Heart left ventricle (tissue), 16 donors: ENCODE measurements at regions of chr1 and their contacts with region 1.

Region 1: GRCh38 chr1:29202584-29203340 is 21.1 kb upstream of the SRSF4 start:
- DNase-seq: peak; percentile 91 to 96 (median 93)
- ATAC-seq: peak; percentile 91 to 97 (median 94)
- H3K4me3 ChIP-seq: no peak overlapping the region
- H3K27ac ChIP-seq: peak overlapping the region; percentile 26 to 85 (median 72)
- H3K4me1 ChIP-seq: peaks cover 0 to 17% (median 9%) of the 10 kb centered on the region in 12 donors
- H3K27me3 ChIP-seq: no peaks in the 10 kb centered on the region
- CTCF ChIP-seq: peak; percentile 93 to 99 (median 98)
- POLR2A ChIP-seq: no peak

Region 2: GRCh38 chr1:28792644-28793121 is 410.1 kb before region 1 on chr1:
- intact Hi-C with region 1: loop called in 3 of 10 experiments (anchors 5 to 10 kb)
- DNase-seq: no peak
- ATAC-seq: peak in 2 of 4 donors; percentile 47 to 61
- H3K4me3 ChIP-seq: no peak overlapping the region
- H3K27ac ChIP-seq: peak overlapping the region in 1 of 12 donors; percentile 48
- H3K4me1 ChIP-seq: peaks cover 0 to 13% (median 0%) of the 10 kb centered on the region in 12 donors
- H3K27me3 ChIP-seq: peaks cover 0 to 9% (median 0%) of the 10 kb centered on the region in 9 donors
- CTCF ChIP-seq: peak in 2 of 12 donors; percentile 19 to 41
- POLR2A ChIP-seq: no peak

Region 3: DNA sequence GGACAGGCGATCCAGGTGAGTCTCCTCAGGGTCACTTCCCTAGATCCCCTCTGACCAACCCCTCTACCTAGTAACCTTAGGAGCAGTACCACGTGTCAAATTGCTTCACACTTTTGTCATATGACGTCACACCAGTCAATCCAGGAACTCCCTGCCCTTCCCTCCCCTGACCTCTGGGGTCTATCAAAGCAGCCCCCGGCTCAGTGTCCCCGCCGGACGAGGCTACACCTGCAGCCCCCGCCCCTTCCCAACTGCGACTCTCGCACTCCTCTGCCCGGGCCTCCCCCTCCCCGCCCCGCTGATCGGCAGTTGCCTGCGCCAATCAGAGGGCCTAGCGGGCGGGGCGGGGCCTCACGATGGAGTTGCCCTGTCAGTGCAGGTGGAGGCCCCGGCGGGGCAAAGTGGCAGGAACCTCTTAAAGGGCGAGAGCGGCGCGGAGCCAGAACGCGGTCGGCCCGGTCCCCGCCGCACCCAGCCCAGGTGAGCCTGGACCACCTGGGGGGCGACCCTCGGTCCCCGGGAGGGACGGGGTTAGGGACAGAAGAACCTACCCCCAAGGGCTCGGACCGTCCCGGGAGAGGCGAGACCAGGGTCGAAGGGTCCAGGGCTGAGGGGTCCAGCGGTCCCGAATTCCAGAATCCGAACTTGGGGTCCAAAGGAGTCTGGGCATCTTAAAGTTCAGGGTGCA is 315.9 kb before region 1 on chr1:
- intact Hi-C with region 1: loop called in 9 of 10 experiments (anchors 1 to 2 kb)
- DNase-seq: peak; percentile 83 to 94 (median 87)
- ATAC-seq: peak; percentile 76 to 85 (median 82)
- H3K4me3 ChIP-seq: peak overlapping the region; percentile 60 to 94 (median 87)
- H3K27ac ChIP-seq: peak overlapping the region; percentile 53 to 90 (median 84)
- H3K4me1 ChIP-seq: peaks cover 0 to 55% (median 16%) of the 10 kb centered on the region in 12 donors
- H3K27me3 ChIP-seq: peaks cover 0 to 10% (median 0%) of the 10 kb centered on the region in 9 donors
- CTCF ChIP-seq: no peak
- POLR2A ChIP-seq: peak; percentile 54 to 70

Region 4: GRCh38 chr1:29043274-29043965 is 159.3 kb before region 1 on chr1:
- intact Hi-C with region 1: loop called in 6 of 10 experiments (anchors 5 to 10 kb)
- DNase-seq: peak in 3 of 5 donors; percentile 14 to 43 (median 35)
- ATAC-seq: peak; percentile 84 to 97 (median 95)
- H3K4me3 ChIP-seq: peak overlapping the region in 1 of 12 donors; percentile 10
- H3K27ac ChIP-seq: peak overlapping the region in 6 of 12 donors; percentile 22 to 73 (median 50)
- H3K4me1 ChIP-seq: peaks cover 0 to 11% (median 0%) of the 10 kb centered on the region in 12 donors
- H3K27me3 ChIP-seq: no peaks in the 10 kb centered on the region
- CTCF ChIP-seq: no peak
- POLR2A ChIP-seq: no peak

Region 5: GRCh38 chr1:29055160-29055559 is 147.6 kb before region 1 on chr1:
- intact Hi-C with region 1: no loop called
- DNase-seq: no peak
- ATAC-seq: no peak
- H3K4me3 ChIP-seq: no peak overlapping the region
- H3K27ac ChIP-seq: peak overlapping the region in 1 of 12 donors; percentile 30
- H3K4me1 ChIP-seq: no peaks in the 10 kb centered on the region
- H3K27me3 ChIP-seq: no peaks in the 10 kb centered on the region
- CTCF ChIP-seq: no peak
- POLR2A ChIP-seq: no peak

Region 6: GRCh38 chr1:29113413-29114117 is 89.2 kb before region 1 on chr1:
- intact Hi-C with region 1: no loop called
- DNase-seq: no peak
- ATAC-seq: no peak
- H3K4me3 ChIP-seq: no peak overlapping the region
- H3K27ac ChIP-seq: no peak overlapping the region
- H3K4me1 ChIP-seq: no peaks in the 10 kb centered on the region
- H3K27me3 ChIP-seq: no peaks in the 10 kb centered on the region
- CTCF ChIP-seq: no peak
- POLR2A ChIP-seq: no peak

Region 7: GRCh38 chr1:29181413-29182225 is 21.1 kb before region 1 on chr1 and contains the start of gene SRSF4:
- intact Hi-C with region 1: loop called in 1 of 10 experiments (anchors 1 kb)
- DNase-seq: peak; percentile 99 to 100 (median 99)
- ATAC-seq: peak; percentile 92 to 97 (median 96)
- H3K4me3 ChIP-seq: peak within 1 kb of the TSS; percentile 74 to 100 (median 98)
- H3K27ac ChIP-seq: peak within 1 kb of the TSS; percentile 85 to 100 (median 100)
- H3K4me1 ChIP-seq: peaks cover 11 to 51% (median 45%) of the 10 kb centered on the region in 12 donors
- H3K27me3 ChIP-seq: no peaks in the 10 kb centered on the region
- CTCF ChIP-seq: peak; percentile 57 to 96 (median 84)
- POLR2A ChIP-seq: peak in 1 of 2 donors; percentile 87
- total RNA-seq, gene SRSF4: 40.4 to 54.6 (median 49.0) TPM

Region 8: GRCh38 chr1:29245876-29246275 is 43.1 kb after region 1 on chr1:
- intact Hi-C with region 1: no loop called
- DNase-seq: no peak
- ATAC-seq: peak in 3 of 4 donors; percentile 47 to 63 (median 60)
- H3K4me3 ChIP-seq: no peak overlapping the region
- H3K27ac ChIP-seq: no peak overlapping the region
- H3K4me1 ChIP-seq: no peaks in the 10 kb centered on the region
- H3K27me3 ChIP-seq: peaks cover 0 to 4% (median 0%) of the 10 kb centered on the region in 9 donors
- CTCF ChIP-seq: peak in 7 of 12 donors; percentile 23 to 49 (median 33)
- POLR2A ChIP-seq: no peak